SK-N-SH (cell line): ENCODE measurements at regions of chr21 and their contacts with region 1.

Region 1: DNA sequence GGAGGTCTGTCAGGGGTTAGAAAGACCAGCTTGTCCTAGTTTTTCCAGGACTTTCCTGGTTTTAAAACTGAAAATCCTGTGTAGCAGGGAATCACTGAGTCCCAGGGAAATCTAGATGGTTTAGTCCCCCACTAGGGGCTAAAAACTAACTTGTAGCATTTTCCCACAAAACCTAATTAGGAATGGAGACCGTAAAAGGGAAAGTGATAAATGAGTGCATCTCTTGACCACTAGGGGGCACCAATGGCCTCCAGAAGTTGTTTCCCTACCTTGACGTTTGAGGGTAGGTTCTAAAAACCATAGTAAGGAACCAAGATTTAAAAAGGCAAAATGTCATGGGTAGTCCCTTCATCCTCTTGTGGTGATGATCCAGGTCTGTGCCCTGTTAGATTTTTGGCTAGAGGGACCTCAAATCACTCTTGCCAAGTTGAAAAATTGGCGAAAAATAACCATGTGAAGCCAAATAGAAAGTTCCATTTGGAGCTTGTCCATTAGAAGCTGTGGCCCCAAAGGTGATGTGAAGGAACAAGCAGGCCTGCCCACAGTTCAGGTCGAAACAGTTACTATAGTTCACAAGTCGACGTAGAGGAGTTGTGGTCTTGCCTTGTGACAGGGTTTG is 24.5 kb downstream of the CLIC6 start:
- DNase-seq: peak; percentile 63
- H3K4me3 ChIP-seq: no peak overlapping the region; a peak in 1 of 4 replicates
- H3K27ac ChIP-seq: no peak overlapping the region
- H3K4me1 ChIP-seq: no peaks in the 10 kb centered on the region; a peak in 1 of 4 replicates
- H3K27me3 ChIP-seq: peaks cover 38% of the 10 kb centered on the region; the same call in 1 of the 2 replicates
- CTCF ChIP-seq: peak; percentile 87
- EP300 ChIP-seq: no peak
- RAD21 ChIP-seq: peak; percentile 80

Region 2: GRCh38 chr21:34707876-34708325 is 14.6 kb after region 1 on chr21:
- CTCF ChIA-PET with region 1: interaction called, 34 read pairs
- POLR2A ChIA-PET with region 1: no interaction called
- DNase-seq: no peak
- H3K4me3 ChIP-seq: no peak overlapping the region
- H3K27ac ChIP-seq: no peak overlapping the region
- H3K4me1 ChIP-seq: peaks cover 0 to 16% of the 10 kb centered on the region in 2 experiments; a peak in 2 of 4 replicates
- H3K27me3 ChIP-seq: peaks cover 42% of the 10 kb centered on the region
- CTCF ChIP-seq: no peak
- EP300 ChIP-seq: no peak
- RAD21 ChIP-seq: no peak

Region 3: DNA sequence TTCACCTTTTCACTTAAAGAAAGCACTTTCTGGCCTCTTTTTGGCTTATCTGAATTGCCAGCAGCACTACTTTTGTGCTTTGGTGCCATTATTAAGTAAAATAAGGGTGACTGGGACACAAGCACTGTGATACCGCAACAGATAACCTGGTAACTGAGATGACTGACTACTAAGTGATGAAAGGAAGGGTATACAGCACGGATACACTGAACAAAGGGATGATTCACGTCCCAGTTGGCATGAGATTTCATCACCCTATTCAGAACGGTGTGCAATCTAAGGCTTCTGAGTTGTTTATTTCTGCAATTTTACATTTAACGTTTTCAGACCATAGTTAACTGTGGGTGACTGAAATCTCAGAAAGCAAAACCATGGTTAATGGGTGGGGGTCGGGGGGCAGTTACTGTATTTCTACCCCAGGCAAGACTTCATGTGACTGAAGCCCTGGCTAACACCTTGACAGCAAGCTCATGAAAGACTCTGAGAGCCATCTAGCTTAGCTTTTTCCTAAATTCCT is 78.3 kb after region 1 on chr21:
- CTCF ChIA-PET with region 1: no interaction called
- POLR2A ChIA-PET with region 1: no interaction called
- DNase-seq: no peak
- H3K4me3 ChIP-seq: no peak overlapping the region
- H3K27ac ChIP-seq: no peak overlapping the region
- H3K4me1 ChIP-seq: no peaks in the 10 kb centered on the region; a peak in 1 of 4 replicates
- H3K27me3 ChIP-seq: no peaks in the 10 kb centered on the region
- CTCF ChIP-seq: no peak
- EP300 ChIP-seq: no peak
- RAD21 ChIP-seq: no peak

Region 4: DNA sequence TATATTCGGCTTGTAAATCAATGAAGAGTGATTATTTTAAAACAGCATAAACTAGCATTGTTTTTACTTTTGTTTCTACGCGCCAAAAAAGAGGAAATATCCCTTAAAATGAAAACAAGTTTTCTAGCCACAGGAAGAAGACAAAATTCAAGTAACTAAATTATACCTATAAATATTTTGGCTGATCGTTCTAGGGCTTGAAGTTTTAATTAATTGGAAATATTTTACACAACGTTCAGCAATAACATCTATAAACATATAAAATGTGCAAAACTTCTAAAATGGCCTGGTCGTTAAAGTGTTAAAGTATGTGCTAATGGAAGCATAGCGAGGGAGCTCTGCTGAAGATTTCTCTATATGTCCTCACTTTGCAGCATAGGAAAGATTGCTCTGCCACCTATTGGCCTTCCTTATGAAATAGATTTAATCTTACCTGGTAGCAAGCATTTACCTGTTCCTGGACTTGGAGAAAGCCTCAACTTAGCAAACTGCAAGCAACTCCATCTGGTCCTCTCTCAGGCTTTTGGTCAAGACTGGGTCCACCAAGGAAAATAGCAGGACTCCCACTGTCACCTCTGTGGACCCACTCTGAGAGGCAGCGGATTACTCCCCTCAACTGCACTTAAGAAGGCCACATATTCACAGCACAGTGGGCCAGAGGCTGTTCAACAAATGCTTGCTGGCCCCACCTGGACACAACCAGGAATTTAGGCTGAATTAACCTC is 707.1 kb after region 1 on chr21:
- CTCF ChIA-PET with region 1: interaction called, 11 read pairs
- POLR2A ChIA-PET with region 1: no interaction called
- DNase-seq: peak; percentile 43
- H3K4me3 ChIP-seq: no peak overlapping the region
- H3K27ac ChIP-seq: no peak overlapping the region
- H3K4me1 ChIP-seq: peaks cover 0 to 9% of the 10 kb centered on the region in 2 experiments; a peak in 2 of 4 replicates
- H3K27me3 ChIP-seq: no peaks in the 10 kb centered on the region
- CTCF ChIP-seq: peak; percentile 67
- EP300 ChIP-seq: no peak
- RAD21 ChIP-seq: peak; percentile 79